PC-9 (cell line): ENCODE measurements at regions of chr1 and their contacts with region 1.

Region 1: DNA sequence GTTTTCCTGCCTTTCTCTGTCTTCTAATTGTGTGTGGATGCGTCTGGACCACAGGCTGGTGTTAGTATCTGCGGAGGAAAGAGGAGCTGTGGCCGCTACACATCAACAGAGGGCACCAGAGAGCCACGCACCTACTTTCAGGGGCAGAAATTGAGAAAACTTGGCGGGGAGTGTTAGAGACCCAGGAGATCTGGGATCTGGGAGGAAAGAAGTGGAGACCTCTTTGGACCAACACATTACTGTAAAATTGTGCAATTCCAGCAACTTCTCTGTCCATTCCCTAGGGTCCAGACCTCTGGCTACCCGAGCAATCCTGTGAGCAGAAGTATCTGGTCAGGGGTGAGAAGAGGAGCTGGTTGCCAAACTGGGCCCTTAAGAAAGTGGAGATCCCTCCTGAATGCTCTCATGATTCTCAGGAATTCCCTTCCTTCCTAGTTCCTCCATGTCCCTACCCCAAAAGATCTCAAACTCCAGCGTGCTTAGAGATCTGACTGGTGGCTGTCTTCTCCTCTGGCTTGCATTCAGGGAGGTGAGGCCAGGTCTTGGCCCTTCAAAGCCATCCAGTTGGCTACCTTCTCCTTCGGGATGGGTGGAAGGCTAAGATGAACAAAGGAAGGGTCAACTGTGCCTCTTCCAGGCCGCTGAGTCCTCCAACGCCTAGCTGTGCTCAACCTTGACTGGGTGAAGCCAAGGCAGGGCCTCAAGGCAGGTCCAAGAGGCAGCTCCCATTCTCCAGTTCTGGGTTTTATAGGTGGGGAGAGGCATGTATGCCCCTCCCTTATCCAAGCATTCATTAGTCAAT is 1.2 kb upstream of the KIRREL1 start:
- DNase-seq: peak in 1 of 2 experiments; percentile 67
- H3K4me3 ChIP-seq: no peak overlapping the region
- H3K27ac ChIP-seq: no peak overlapping the region
- H3K4me1 ChIP-seq: no peaks in the 10 kb centered on the region
- H3K27me3 ChIP-seq: peaks cover 32% of the 10 kb centered on the region
- CTCF ChIP-seq: peak; percentile 94

Region 2: GRCh38 chr1:157969697-157970485 is 22.3 kb before region 1 on chr1:
- CTCF ChIA-PET with region 1: interaction called, 4 read pairs
- POLR2A ChIA-PET with region 1: no interaction called
- intact Hi-C with region 1: loop called (anchors 1 kb)
- DNase-seq: peak; percentile 45 to 49
- H3K4me3 ChIP-seq: no peak overlapping the region
- H3K27ac ChIP-seq: no peak overlapping the region
- H3K4me1 ChIP-seq: no peaks in the 10 kb centered on the region
- H3K27me3 ChIP-seq: peaks cover 22% of the 10 kb centered on the region; the same call in 1 of the 2 replicates
- CTCF ChIP-seq: peak; percentile 77

Region 3: DNA sequence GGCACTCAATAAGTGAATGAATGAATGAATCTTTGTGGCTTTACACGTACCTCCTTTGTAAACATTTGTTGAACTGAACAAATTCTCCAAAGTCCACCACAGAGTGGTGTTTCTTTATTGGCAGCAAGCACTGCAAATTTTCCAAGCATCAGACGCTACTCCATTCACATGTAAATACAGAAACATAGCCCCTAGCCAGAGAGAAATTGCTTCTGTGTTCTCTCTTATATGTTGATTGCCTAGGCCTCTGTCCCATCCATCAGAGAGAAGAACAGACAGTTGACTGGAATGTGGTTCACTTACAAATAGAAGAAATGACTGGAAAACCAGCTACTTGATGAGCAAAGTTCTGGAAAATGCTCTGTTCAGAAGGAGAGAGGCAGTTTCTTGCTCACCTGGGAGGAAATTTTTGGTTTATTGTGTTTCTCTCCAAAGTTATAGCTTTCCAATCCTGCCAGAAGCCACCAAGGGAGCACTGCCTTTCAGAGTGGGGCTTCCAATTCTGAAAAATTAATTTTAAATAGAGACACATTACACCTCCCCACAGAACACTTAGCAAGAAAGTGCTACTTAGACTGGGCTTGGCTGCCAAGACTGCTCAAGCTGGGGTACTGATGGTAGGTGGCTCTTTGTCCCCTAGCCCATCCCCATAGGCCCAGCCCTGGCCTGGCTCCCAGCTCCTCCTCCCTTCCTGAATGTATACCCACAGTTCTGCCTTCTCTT is 16.8 kb before region 1 on chr1:
- CTCF ChIA-PET with region 1: interaction called, 16 read pairs
- POLR2A ChIA-PET with region 1: no interaction called
- intact Hi-C with region 1: no loop called
- DNase-seq: no peak
- H3K4me3 ChIP-seq: no peak overlapping the region
- H3K27ac ChIP-seq: no peak overlapping the region
- H3K4me1 ChIP-seq: no peaks in the 10 kb centered on the region
- H3K27me3 ChIP-seq: peaks cover 9% of the 10 kb centered on the region; the same call in 1 of the 2 replicates
- CTCF ChIP-seq: no peak

Region 4: DNA sequence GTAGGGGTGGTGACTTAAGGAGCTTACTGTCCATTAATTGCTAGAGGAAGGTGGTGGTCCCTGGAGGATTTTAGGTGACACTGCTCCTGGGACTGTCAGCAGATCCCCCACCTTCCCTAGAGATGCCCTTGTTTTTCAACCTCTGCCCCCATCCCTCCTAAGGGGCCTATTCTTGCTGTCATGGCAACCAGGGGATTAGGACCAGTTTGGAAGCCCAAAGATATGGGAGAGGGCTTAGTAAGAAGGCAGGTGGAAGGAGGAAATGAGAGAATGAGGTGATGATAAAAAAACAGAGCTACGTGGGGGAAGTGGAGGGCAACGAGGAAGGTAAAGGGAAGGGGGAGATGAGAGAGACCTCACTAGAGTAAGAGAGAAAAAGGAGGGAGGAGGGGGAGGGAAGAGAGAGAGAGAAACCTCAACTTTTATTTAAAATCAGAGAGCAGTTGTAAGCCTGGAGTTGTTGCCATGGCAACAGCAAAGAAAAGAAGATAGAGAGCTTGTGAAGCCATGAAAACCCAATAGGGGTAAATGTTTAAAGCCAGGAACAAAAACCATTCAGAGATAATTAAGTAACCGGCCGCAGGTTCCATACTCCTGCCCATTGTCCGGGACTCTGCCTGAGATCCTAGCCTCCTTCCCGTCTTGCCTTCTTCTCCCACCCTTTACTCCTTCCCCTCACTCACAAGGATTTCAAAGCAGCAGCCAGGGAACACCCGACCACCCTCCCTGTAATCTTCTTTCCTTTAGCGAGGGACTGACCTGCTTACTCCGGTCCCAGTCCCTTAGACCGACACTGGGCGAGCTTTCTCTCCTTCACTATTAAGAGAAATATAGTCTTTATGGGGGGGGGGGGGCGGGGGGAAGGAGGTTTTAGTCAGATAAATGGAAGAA is 21.9 kb after region 1 on chr1:
- CTCF ChIA-PET with region 1: interaction called, 10 read pairs
- POLR2A ChIA-PET with region 1: no interaction called
- intact Hi-C with region 1: no loop called
- DNase-seq: no peak
- H3K4me3 ChIP-seq: no peak overlapping the region
- H3K27ac ChIP-seq: no peak overlapping the region
- H3K4me1 ChIP-seq: peaks cover 59% of the 10 kb centered on the region
- H3K27me3 ChIP-seq: no peaks in the 10 kb centered on the region
- CTCF ChIP-seq: no peak

Region 5: GRCh38 chr1:158035976-158036583 is 43.8 kb after region 1 on chr1:
- CTCF ChIA-PET with region 1: interaction called, 16 read pairs
- POLR2A ChIA-PET with region 1: interaction called, 11 read pairs
- intact Hi-C with region 1: loop called (anchors 1 kb)
- DNase-seq: peak in 1 of 2 experiments; percentile 33
- H3K4me3 ChIP-seq: no peak overlapping the region
- H3K27ac ChIP-seq: no peak overlapping the region
- H3K4me1 ChIP-seq: peaks cover 25% of the 10 kb centered on the region
- H3K27me3 ChIP-seq: no peaks in the 10 kb centered on the region
- CTCF ChIP-seq: peak; percentile 93

Region 6: DNA sequence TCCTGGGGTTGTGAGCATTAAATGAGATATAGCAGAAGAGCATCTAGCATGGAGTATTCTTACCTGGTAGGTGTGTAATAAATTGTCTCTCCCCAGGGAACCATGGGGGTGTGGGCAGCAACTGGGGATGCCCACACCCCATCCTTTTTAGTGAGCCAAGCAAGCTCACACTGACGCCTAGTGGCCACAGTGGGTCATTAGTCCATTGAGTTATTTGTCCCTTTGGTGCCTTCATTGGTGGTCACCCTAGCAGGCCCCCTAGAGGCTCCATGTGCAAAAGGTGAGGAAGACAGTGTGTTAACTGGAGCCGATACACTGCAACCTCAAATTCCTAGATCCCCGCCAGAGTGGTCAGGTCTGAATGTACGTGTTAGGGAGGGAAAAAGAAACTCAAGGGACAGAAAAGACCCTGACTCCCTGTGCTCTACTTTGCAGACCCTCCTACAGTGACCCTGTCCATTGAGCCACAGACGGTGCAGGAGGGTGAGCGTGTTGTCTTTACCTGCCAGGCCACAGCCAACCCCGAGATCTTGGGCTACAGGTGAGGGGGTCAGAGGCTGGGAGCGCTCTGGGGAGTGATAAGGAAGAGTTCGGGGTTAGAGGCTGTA is 95.2 kb after region 1 on chr1:
- CTCF ChIA-PET with region 1: interaction called, 13 read pairs
- POLR2A ChIA-PET with region 1: no interaction called
- intact Hi-C with region 1: loop called (anchors 1 kb)
- DNase-seq: peak; percentile 51 to 56
- H3K4me3 ChIP-seq: no peak overlapping the region
- H3K27ac ChIP-seq: no peak overlapping the region
- H3K4me1 ChIP-seq: no peaks in the 10 kb centered on the region
- H3K27me3 ChIP-seq: no peaks in the 10 kb centered on the region
- CTCF ChIP-seq: peak; percentile 96

Region 7: DNA sequence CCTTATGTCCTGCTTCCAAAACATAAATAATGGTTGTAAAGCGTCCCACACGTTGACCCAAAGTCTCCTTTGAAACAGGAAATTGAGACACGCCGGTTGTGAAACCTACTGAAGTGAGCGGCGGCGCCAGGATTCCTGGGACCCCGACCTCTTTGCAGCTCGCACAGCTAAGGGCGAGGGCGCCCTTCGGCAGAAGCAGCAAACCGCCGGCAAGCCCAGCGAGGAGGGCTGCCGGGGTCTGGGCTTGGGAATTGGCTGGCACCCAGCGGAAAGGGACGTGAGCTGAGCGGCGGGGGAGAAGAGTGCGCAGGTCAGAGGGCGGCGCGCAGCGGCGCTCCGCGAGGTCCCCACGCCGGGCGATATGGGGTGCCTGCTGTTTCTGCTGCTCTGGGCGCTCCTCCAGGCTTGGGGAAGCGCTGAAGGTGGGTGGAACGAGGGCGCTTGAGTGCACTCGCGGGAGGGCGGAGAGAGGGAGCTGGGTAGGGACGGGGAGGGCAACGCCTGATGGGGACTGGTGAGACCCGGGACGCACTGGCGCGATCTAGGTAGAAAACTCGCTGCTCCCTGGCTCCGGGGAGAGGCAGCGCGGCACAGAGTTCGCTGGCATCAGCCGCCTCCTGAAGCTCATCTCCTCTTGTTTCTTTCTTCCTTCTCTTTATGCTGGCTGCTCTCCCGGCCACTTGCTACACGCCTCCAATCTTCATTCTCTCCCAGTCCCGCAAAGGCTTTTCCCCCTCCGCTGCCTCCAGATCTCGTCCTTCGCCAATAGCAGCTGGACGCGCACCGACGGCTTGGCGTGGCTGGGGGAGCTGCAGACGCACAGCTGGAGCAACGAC is 188.7 kb after region 1 on chr1 and contains the start of gene CD1D:
- CTCF ChIA-PET with region 1: no interaction called
- POLR2A ChIA-PET with region 1: no interaction called
- intact Hi-C with region 1: no loop called
- DNase-seq: no peak
- H3K4me3 ChIP-seq: no peak within 1 kb of the TSS
- H3K27ac ChIP-seq: no peak within 1 kb of the TSS
- H3K4me1 ChIP-seq: no peaks in the 10 kb centered on the region
- H3K27me3 ChIP-seq: peaks cover 80% of the 10 kb centered on the region
- CTCF ChIP-seq: no peak
- total RNA-seq, gene CD1D: not detected in 2 replicates